Psoas muscle (tissue), 8 donors: ENCODE measurements at regions of chr6 and their contacts with region 1.

Region 1: GRCh38 chr6:155646443-155646842 is 190.8 kb upstream of the NOX3 start:
- DNase-seq: no peak
- ATAC-seq: peak in 3 of 4 donors; percentile 43 to 65 (median 56)
- H3K4me3 ChIP-seq: no peak overlapping the region
- H3K27ac ChIP-seq: no peak overlapping the region
- H3K4me1 ChIP-seq: no peaks in the 10 kb centered on the region
- H3K27me3 ChIP-seq: no peaks in the 10 kb centered on the region
- CTCF ChIP-seq: no peak

Region 2: GRCh38 chr6:155001482-155001881 is 645.0 kb before region 1 on chr6:
- intact Hi-C with region 1: no loop called
- DNase-seq: no peak
- ATAC-seq: no peak
- H3K4me3 ChIP-seq: no peak overlapping the region
- H3K27ac ChIP-seq: no peak overlapping the region
- H3K4me1 ChIP-seq: peaks cover 5% of the 10 kb centered on the region
- H3K27me3 ChIP-seq: no peaks in the 10 kb centered on the region
- CTCF ChIP-seq: no peak

Region 3: GRCh38 chr6:155678361-155678760 is 31.9 kb after region 1 on chr6:
- intact Hi-C with region 1: loop called in 1 of 2 experiments (anchors 2 kb)
- DNase-seq: no peak
- ATAC-seq: no peak
- H3K4me3 ChIP-seq: no peak overlapping the region
- H3K27ac ChIP-seq: no peak overlapping the region
- H3K4me1 ChIP-seq: no peaks in the 10 kb centered on the region
- H3K27me3 ChIP-seq: no peaks in the 10 kb centered on the region
- CTCF ChIP-seq: no peak